ENCODE measurements at regions of chr2 and their contacts with region 1.

Region 1: GRCh38 chr2:46669996-46670793 is 190.8 kb downstream of the TMEM247 start:
- DNase-seq: no peak
- H3K4me3 ChIP-seq: no peak overlapping the region
- H3K27ac ChIP-seq: peak overlapping the region in 1 of 2 experiments; percentile 11; a peak in 2 of 4 replicates
- H3K4me1 ChIP-seq: peaks cover 12 to 13% of the 10 kb centered on the region in 2 experiments; a peak in 3 of 4 replicates
- H3K27me3 ChIP-seq: no peaks in the 10 kb centered on the region
- CTCF ChIP-seq: no peak
- EP300 ChIP-seq: no peak
- RAD21 ChIP-seq: no peak

Region 2: DNA sequence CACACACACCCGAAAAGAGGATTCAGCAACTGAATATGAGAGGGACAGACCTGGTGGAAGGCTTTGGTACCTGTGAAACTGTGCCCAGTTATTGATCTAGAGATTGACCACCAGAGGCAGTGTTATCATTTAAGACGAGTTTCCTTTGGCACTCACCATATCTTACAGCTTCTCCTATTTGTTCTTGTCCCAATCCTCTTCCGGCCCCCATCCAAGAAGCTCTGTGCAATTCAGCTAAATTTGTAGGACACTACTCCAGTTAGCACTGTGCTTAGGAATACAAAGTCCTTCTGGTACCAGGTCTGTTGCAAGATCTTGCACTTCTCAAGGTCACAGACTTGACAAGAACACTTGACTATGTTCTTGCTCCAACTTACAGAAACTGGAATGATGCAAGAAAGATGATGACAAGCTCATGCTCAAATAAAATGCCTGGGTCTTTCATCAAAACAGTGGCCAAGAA is 13.1 kb before region 1 on chr2:
- CTCF ChIA-PET with region 1: interaction called, 14 read pairs
- POLR2A ChIA-PET with region 1: no interaction called
- DNase-seq: peak; percentile 52
- H3K4me3 ChIP-seq: no peak overlapping the region
- H3K27ac ChIP-seq: no peak overlapping the region
- H3K4me1 ChIP-seq: peaks cover 7 to 18% of the 10 kb centered on the region in 2 experiments; a peak in 2 of 4 replicates
- H3K27me3 ChIP-seq: no peaks in the 10 kb centered on the region
- CTCF ChIP-seq: peak; percentile 67
- EP300 ChIP-seq: no peak
- RAD21 ChIP-seq: peak; percentile 68

Region 3: GRCh38 chr2:46683541-46683940 is 13.3 kb after region 1 on chr2:
- CTCF ChIA-PET with region 1: no interaction called
- POLR2A ChIA-PET with region 1: no interaction called
- DNase-seq: no peak
- H3K4me3 ChIP-seq: no peak overlapping the region
- H3K27ac ChIP-seq: no peak overlapping the region
- H3K4me1 ChIP-seq: peaks cover 0 to 20% of the 10 kb centered on the region in 2 experiments; a peak in 2 of 4 replicates
- H3K27me3 ChIP-seq: no peaks in the 10 kb centered on the region
- CTCF ChIP-seq: no peak
- EP300 ChIP-seq: no peak
- RAD21 ChIP-seq: no peak